H1 (cell line): ENCODE measurements at regions of chr2 and their contacts with region 1.

Region 1: DNA sequence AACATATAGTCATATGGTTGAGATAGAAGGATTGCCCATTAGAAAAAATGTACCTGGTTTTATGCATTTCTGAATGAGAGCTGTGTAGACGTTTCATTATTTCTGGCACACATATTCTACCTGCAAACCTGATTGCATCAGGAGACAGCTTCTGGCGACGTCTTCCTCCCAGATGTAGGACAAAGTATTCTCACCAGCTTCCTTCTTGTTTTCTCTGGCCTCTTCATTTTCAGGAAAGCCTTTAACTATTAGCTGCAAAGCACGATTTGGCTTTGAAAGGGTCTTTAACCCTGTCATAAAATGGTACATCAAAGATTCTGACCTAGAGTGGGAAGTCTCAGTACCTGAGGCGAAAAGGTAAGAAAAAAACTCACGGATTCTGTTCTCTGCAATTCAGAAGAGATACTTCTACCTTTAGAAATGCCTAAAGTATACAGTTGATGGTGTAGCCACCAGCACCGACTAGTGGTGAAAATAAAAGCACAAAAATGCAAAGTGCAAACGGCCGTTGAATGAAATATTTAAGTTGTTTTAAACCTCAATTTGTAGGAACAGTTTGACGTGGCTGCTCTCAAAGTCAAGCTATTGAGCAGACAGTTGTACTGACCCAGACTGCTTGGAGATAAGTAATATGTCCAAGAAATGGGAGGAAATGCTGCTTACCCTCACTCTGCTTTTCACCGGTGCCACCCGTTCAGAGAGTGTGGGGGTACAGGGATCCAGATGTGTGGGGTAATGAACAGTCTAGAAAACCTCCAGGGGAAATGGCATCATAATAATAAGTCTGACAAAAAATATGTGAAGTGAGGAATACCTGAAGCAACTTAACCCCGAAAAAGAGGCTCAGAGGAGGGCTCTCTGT is 20.2 kb downstream of the IL18RAP start:
- DNase-seq: no peak
- H3K4me3 ChIP-seq: no peak overlapping the region
- H3K27ac ChIP-seq: no peak overlapping the region
- H3K4me1 ChIP-seq: peaks cover 0 to 3% (median 0%) of the 10 kb centered on the region in 4 experiments; a peak in 1 of 7 replicates
- H3K27me3 ChIP-seq: no peaks in the 10 kb centered on the region
- CTCF ChIP-seq: peak in 2 of 3 experiments; percentile 65 to 69; a peak in 3 of 4 replicates
- EP300 ChIP-seq: no peak
- POLR2A ChIP-seq: no peak
- RAD21 ChIP-seq: peak; percentile 72 to 79

Region 2: GRCh38 chr2:102235491-102235890 is 207.7 kb before region 1 on chr2:
- CTCF ChIA-PET with region 1: interaction called, 24 read pairs
- POLR2A ChIA-PET with region 1: no interaction called
- DNase-seq: peak in 1 of 2 experiments; percentile 51
- H3K4me3 ChIP-seq: no peak overlapping the region
- H3K27ac ChIP-seq: no peak overlapping the region
- H3K4me1 ChIP-seq: no peaks in the 10 kb centered on the region
- H3K27me3 ChIP-seq: no peaks in the 10 kb centered on the region
- CTCF ChIP-seq: peak; percentile 63 to 74 (median 72)
- EP300 ChIP-seq: no peak
- POLR2A ChIP-seq: no peak
- RAD21 ChIP-seq: peak; percentile 76 to 86

Region 3: DNA sequence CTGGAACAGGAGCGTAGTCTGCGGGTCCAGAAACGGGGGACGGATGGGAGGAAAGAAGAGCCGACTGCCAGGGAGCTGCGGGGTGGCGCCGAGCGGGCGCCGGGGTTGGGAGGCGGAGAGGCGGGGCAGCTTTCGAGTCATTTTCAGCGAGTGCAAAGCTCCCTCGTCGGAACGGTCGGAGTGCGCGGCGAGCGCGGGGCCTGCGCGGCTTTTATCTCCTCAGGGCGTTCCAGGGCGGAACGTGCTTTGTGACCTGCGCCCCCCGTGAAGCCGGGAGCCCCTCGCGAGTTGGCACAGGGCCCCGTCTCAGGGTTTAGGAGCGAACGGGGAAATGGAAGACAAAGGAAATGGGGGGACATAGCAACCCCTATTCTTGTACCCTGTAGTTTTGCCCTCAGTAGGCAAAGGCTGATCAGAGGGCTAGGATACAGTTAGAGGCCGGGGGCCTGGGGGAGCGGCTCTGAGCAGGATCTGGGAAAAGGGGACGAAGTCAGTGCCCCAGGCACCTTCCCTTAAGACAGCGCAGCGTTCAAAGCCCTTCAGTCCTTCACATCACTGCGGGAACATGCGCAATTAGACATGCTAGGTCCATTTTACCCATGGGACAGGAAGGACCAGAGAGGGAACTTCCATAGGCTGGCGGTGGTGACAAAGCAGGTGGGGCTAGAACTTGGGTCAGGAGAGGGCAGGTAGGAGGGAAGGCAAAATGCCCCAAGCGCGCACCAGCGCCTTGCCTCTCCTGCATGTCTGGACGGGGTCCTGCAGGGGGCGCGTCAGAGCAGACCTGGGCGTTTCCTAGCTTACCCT is 192.0 kb before region 1 on chr2:
- CTCF ChIA-PET with region 1: interaction called, 10 read pairs
- POLR2A ChIA-PET with region 1: no interaction called
- DNase-seq: peak in 1 of 2 experiments; percentile 82
- H3K4me3 ChIP-seq: peak overlapping the region; percentile 34 to 65 (median 45)
- H3K27ac ChIP-seq: no peak overlapping the region
- H3K4me1 ChIP-seq: peaks cover 0 to 4% (median under 1%) of the 10 kb centered on the region in 4 experiments; a peak in 2 of 7 replicates
- H3K27me3 ChIP-seq: peaks cover 0 to 18% (median 15%) of the 10 kb centered on the region in 4 experiments; a peak in 6 of 7 replicates
- CTCF ChIP-seq: peak; percentile 55 to 73 (median 71)
- EP300 ChIP-seq: no peak
- POLR2A ChIP-seq: no peak
- RAD21 ChIP-seq: peak; percentile 38 to 51; a peak in 3 of 4 replicates